ENCODE measurements at regions of chr7 and their contacts with region 1.

Region 1: DNA sequence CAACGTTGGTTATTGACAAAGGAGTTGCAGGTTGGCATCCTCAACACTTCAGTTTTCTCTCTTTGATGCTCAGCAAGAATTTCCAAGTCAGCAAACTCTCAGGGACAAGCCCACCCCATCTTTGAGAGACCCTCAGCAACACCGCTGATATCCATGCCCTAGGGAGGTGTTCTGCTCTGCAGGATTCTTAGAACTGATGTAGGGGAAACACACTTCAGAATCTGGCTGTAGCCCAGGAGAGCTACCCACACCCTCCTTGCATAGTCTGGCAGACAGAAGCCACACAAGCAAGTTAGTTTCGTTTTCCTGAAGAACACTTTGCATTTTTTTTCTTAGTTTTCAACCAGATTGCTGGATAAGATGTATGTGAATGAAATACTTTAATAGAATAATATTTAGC is 822 bp downstream of the SAMD9L start:
- DNase-seq: peak; percentile 55
- H3K4me3 ChIP-seq: peak overlapping the region; percentile 22 to 47 (median 42)
- H3K27ac ChIP-seq: peak overlapping the region; percentile 28 to 51 (median 39)
- H3K4me1 ChIP-seq: peaks cover 0 to 10% (median 5%) of the 10 kb centered on the region in 4 donors
- H3K27me3 ChIP-seq: no peaks in the 10 kb centered on the region
- CTCF ChIP-seq: no peak
- EP300 ChIP-seq: no peak
- POLR2A ChIP-seq: no peak

Region 2: DNA sequence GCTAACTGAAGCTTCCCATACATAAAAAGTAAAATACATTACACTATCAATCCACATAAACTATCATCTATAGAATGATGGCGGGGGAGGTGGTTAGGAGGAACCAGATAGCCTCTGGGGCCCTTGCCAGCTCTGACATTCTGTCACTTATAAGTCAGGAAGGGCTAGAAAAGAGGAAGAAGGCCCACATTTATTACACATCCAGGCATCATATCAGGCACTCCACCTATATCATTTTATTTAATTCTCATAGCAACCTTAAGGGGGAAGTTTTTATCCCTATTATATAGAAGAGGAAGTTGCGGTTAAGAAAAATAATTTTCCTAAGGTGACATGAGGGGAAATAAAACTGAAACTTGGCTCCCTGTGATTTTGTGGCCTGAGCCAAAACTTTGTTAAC is 49.0 kb after region 1 on chr7:
- intact Hi-C with region 1: loop called (anchors 5 kb)
- DNase-seq: no peak
- H3K4me3 ChIP-seq: no peak overlapping the region
- H3K27ac ChIP-seq: no peak overlapping the region
- H3K4me1 ChIP-seq: no peaks in the 10 kb centered on the region
- H3K27me3 ChIP-seq: no peaks in the 10 kb centered on the region
- CTCF ChIP-seq: no peak
- EP300 ChIP-seq: no peak
- POLR2A ChIP-seq: no peak

Region 3: DNA sequence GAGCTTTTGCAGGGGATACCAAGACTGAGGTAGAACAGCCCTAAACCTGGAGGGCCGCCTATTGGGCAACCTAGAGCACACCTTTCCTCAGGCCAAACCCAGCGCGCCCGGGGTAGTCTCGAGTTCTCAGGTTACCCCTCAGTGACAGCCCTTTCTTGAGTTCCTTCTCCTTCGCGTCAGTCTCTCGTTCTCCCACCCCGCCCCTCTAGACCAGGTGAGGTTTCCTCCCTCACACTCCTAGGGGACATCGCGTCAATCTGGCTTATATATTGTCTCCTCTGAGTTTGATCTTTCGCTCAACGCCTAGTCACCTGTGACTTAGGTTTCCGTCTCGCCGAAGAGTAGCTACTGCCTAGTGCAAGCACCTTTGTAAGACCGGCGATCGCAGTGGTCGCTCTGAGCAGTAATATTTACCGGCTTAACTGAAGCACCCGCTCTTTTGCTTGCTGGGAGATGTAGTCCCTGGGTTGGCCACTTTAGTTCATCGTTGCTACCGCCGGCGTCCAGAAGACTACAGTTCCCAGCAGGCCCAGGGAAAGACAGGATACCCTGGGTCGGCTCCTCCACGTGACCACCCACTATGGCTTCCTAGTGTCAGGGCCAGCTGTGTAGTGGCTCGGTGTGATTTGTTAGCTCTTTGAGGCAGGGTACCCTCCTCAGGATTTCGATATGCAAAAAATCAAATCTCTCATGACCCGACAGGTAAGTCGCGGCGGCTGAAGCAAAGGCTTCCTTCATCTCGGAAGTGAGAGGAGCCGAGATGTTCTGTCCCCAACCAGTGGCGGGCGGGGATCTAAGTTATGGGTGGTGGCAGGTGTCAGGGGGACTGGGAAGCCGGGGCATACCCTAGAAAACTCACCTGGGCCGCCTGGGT is 84.7 kb after region 1 on chr7 and contains the start of gene VPS50:
- intact Hi-C with region 1: loop called (anchors 10 kb)
- DNase-seq: peak; percentile 97
- H3K4me3 ChIP-seq: peak within 1 kb of the TSS; percentile 64 to 75 (median 68)
- H3K27ac ChIP-seq: peak within 1 kb of the TSS; percentile 59 to 73 (median 64)
- H3K4me1 ChIP-seq: peaks cover 0 to 20% (median 13%) of the 10 kb centered on the region in 4 donors
- H3K27me3 ChIP-seq: no peaks in the 10 kb centered on the region
- CTCF ChIP-seq: peak in 1 of 4 experiments; percentile 28
- EP300 ChIP-seq: no peak
- POLR2A ChIP-seq: no peak
- total RNA-seq, gene VPS50: 21.7 to 36.4 (median 26.4) TPM